GM23248 (cell line): ENCODE measurements at regions of chr2 and their contacts with region 1.

Region 1: DNA sequence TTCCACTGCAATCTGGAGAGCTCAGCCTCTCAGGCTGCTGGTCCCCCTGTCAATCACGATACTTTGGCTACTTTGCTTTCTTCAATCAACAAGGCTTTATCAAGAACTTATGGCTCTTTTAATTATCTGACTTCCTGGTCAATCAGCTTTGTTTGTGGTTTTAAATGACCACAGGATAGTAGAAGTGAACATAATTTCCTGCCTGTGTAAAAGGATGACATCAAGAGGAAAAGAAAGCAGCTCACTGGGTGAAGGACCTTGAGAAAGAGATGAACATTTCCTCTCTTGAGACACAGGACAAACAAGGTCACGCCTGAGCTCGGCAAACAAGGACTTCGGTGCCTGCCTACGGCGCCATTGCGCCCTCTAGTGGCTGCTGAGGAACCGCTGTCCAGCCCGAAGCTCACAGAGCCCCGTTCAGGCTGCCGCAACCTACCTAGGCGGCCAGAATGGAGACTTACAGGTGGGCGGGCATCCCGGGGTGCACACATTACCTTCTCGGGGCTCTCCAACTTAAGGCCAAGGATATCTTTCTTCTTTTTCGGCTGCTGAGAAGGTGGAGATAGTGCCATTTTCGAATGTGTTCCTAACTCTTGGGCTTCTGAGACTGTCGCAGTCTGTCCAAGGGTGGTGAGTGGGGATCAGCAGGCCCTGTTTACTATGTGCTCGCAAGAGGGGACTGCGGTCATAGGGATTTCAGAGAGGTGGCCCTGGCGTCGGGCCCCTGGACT is 54.0 kb downstream of the IL1RL2 start:
- DNase-seq: peak; percentile 97
- H3K4me3 ChIP-seq: peak overlapping the region; percentile 44
- H3K27ac ChIP-seq: peak overlapping the region; percentile 89
- H3K4me1 ChIP-seq: peaks cover 26% of the 10 kb centered on the region
- H3K27me3 ChIP-seq: no peaks in the 10 kb centered on the region

Region 2: DNA sequence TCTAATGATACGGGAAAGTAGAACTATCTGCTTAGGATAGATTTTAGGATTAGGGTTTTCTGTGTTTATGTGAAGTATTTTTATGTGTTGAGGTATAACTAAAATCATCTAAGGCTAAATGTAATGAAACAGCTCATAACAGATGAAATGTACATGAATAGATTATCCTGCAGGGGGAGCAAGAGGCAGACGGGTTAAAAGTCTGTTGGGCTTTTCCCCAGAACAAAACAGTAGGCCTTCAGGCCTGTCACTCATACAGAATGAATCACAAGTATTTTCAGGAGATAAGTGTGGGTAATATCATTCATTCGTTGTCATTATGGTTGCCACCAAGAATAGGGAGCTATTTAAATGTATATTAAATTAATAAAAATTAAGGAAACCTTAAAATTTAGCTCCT is 356.9 kb before region 1 on chr2:
- in situ Hi-C with region 1: loop called (anchors 10 kb)
- DNase-seq: peak; percentile 78
- H3K4me3 ChIP-seq: no peak overlapping the region
- H3K27ac ChIP-seq: peak overlapping the region; percentile 0
- H3K4me1 ChIP-seq: peaks cover 40% of the 10 kb centered on the region
- H3K27me3 ChIP-seq: no peaks in the 10 kb centered on the region

Region 3: GRCh38 chr2:102020596-102021181 is 220.1 kb before region 1 on chr2:
- in situ Hi-C with region 1: loop called (anchors 5 kb)
- DNase-seq: peak; percentile 89
- H3K4me3 ChIP-seq: no peak overlapping the region
- H3K27ac ChIP-seq: no peak overlapping the region
- H3K4me1 ChIP-seq: peaks cover 40% of the 10 kb centered on the region
- H3K27me3 ChIP-seq: no peaks in the 10 kb centered on the region

Region 4: DNA sequence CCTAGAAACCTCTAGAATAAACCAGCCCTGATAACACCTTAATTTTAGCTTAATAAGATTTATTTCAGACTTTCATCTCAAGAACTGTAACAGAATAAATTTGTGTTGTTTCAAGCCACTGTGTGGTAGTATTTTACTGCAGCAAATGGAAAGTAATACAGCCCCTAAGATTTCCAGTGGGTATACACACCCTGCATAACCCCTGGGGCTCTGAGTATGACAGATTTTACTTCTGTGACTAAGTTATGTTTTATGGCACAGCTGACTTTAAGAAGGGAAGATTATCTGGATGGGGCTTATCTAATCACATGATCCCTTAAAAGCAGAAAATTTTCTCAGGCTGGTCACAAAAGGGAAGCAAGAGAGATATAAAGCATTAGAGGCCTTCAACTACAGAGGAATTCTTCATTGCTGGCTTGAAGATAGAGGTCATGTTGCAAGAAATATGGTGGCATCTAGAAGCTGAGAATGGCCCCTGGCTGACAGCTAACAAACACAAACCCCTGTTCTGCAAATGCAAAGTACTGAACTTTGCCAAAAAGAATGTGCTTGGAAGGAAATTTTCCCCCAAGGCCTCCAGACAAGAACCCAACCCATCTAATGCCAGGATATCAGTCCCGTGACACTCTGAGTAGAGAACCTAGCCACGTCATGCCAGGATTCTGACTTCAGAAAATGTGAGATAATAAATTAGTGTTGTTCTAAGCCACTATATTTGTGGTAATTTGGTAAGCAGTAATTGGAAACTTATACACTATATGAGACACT is 310.7 kb after region 1 on chr2:
- in situ Hi-C with region 1: no loop called
- DNase-seq: no peak
- H3K4me3 ChIP-seq: no peak overlapping the region
- H3K27ac ChIP-seq: no peak overlapping the region
- H3K4me1 ChIP-seq: no peaks in the 10 kb centered on the region
- H3K27me3 ChIP-seq: no peaks in the 10 kb centered on the region; the same call in 1 of the 2 replicates